ENCODE measurements at regions of chr18 and their contacts with region 1.

Region 1: DNA sequence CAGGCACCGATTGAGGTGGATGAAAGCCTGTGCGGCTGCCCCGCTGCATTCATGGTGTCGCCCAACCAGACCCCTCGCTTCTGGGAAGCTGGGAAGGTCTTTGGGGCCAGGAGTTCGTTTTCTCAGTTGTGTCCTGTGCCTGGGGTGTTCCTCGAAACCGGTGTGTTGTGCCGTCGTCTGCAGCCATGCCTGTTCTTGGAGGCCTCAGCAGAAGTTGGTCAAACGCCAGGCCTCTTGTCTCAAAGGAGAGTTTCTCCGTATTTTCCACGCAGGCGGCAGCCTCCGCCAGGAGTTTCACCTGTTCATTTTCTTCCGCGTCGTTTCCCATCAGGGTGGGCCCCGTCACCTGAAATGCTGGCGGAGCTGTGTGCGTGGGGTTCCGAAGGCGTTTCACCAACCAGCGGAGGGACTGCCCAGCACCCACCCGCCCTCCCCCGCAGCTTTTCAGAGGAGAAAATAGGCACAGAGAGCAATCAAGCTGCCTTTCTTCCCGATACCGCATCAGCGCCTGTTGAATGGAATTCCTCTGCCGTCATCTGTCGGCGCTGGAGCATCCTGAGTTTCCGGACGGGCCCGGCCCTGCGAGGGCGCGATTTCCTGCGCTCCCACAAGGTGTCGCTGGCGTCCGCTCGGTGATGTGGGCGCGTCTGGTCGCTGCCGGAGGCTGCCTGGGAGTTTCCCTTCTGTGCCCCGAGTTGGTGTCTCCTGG is 17.0 kb upstream of the NFATC1 start:
- DNase-seq: peak; percentile 67 to 87 (median 78)
- ATAC-seq: peak; percentile 95
- H3K4me3 ChIP-seq: no peak overlapping the region
- H3K4me3 Mint-ChIP-seq: peak overlapping the region in 2 of 10 donors; percentile 11 to 50
- H3K27ac ChIP-seq: no peak overlapping the region
- H3K27ac Mint-ChIP-seq: peak overlapping the region in 7 of 9 donors; percentile 18 to 77 (median 63)
- H3K4me1 ChIP-seq: peaks cover 6 to 7% of the 10 kb centered on the region in 2 donors
- H3K4me1 Mint-ChIP-seq: peaks cover 4 to 9% (median 9%) of the 10 kb centered on the region in 7 donors
- H3K27me3 ChIP-seq: no peaks in the 10 kb centered on the region
- H3K27me3 Mint-ChIP-seq: no peaks in the 10 kb centered on the region

Region 2: DNA sequence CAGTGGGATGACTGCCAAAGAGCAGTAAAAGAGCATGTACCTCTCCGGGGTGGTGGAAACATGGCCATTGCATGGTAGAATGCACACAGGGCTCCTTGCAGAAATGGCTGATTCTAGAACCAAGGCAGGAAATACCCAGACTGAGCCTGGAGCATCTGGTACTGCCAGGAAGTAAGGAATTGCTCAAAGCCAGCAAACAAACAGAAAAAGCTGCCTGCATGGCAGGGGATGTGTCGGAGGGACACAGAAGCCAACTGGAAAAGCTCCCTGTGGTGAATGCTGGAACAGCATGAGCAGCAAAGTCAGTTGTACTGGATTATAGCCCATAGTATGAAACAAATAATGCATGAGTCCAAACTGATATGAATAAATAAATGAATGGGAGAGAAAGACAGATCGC is 61.0 kb before region 1 on chr18:
- CTCF ChIA-PET with region 1: no interaction called
- POLR2A ChIA-PET with region 1: no interaction called
- intact Hi-C with region 1: no loop called
- DNase-seq: no peak
- ATAC-seq: no peak
- H3K4me3 ChIP-seq: no peak overlapping the region
- H3K4me3 Mint-ChIP-seq: no peak overlapping the region
- H3K27ac ChIP-seq: no peak overlapping the region
- H3K27ac Mint-ChIP-seq: peak overlapping the region in 6 of 9 donors; percentile 15 to 80 (median 62)
- H3K4me1 ChIP-seq: peaks cover 0 to 7% of the 10 kb centered on the region in 2 donors
- H3K4me1 Mint-ChIP-seq: peaks cover 8 to 29% (median 17%) of the 10 kb centered on the region in 7 donors
- H3K27me3 ChIP-seq: no peaks in the 10 kb centered on the region
- H3K27me3 Mint-ChIP-seq: no peaks in the 10 kb centered on the region

Region 3: GRCh38 chr18:79528846-79529245 is 150.2 kb after region 1 on chr18:
- CTCF ChIA-PET with region 1: interaction called, 60 read pairs
- POLR2A ChIA-PET with region 1: no interaction called
- intact Hi-C with region 1: loop called (anchors 1 kb)
- DNase-seq: peak; percentile 47 to 88 (median 77)
- ATAC-seq: peak; percentile 65
- H3K4me3 ChIP-seq: no peak overlapping the region
- H3K4me3 Mint-ChIP-seq: peak overlapping the region in 1 of 10 donors; percentile 6
- H3K27ac ChIP-seq: no peak overlapping the region
- H3K27ac Mint-ChIP-seq: peak overlapping the region in 6 of 9 donors; percentile 30 to 85 (median 79)
- H3K4me1 ChIP-seq: peaks cover 8 to 21% of the 10 kb centered on the region in 2 donors
- H3K4me1 Mint-ChIP-seq: peaks cover 7 to 49% (median 33%) of the 10 kb centered on the region in 7 donors
- H3K27me3 ChIP-seq: no peaks in the 10 kb centered on the region
- H3K27me3 Mint-ChIP-seq: no peaks in the 10 kb centered on the region

Region 4: GRCh38 chr18:80086281-80086680 is 707.6 kb after region 1 on chr18:
- CTCF ChIA-PET with region 1: no interaction called
- POLR2A ChIA-PET with region 1: no interaction called
- intact Hi-C with region 1: no loop called
- DNase-seq: no peak
- ATAC-seq: no peak
- H3K4me3 ChIP-seq: no peak overlapping the region
- H3K4me3 Mint-ChIP-seq: no peak overlapping the region
- H3K27ac ChIP-seq: no peak overlapping the region
- H3K27ac Mint-ChIP-seq: no peak overlapping the region
- H3K4me1 ChIP-seq: no peaks in the 10 kb centered on the region
- H3K4me1 Mint-ChIP-seq: no peaks in the 10 kb centered on the region
- H3K27me3 ChIP-seq: no peaks in the 10 kb centered on the region
- H3K27me3 Mint-ChIP-seq: peaks cover under 1 to 26% (median 14%) of the 10 kb centered on the region in 5 donors

Measured in naive thymus-derived CD4-positive, alpha-beta T cell (primary cell).